ENCODE measurements at regions of chr6 and their contacts with region 1.

Region 1: GRCh38 chr6:134640975-134641429 is 308.9 kb downstream of the ALDH8A1 start:
- DNase-seq: peak; percentile 86
- ATAC-seq: peak; percentile 92
- H3K4me3 ChIP-seq: no peak overlapping the region
- H3K4me3 Mint-ChIP-seq: no peak overlapping the region
- H3K27ac ChIP-seq: no peak overlapping the region
- H3K27ac Mint-ChIP-seq: no peak overlapping the region
- H3K4me1 ChIP-seq: peaks cover 7 to 8% of the 10 kb centered on the region in 2 donors
- H3K4me1 Mint-ChIP-seq: peaks cover 10% of the 10 kb centered on the region
- H3K27me3 ChIP-seq: no peaks in the 10 kb centered on the region
- H3K27me3 Mint-ChIP-seq: no peaks in the 10 kb centered on the region
- CTCF ChIP-seq: peak; percentile 96

Region 2: GRCh38 chr6:134161036-134161435 is 480.0 kb before region 1 on chr6:
- CTCF ChIA-PET with region 1: interaction called, 16 read pairs
- POLR2A ChIA-PET with region 1: no interaction called
- intact Hi-C with region 1: no loop called
- DNase-seq: no peak
- ATAC-seq: no peak
- H3K4me3 ChIP-seq: no peak overlapping the region
- H3K4me3 Mint-ChIP-seq: no peak overlapping the region
- H3K27ac ChIP-seq: no peak overlapping the region
- H3K27ac Mint-ChIP-seq: no peak overlapping the region
- H3K4me1 ChIP-seq: no peaks in the 10 kb centered on the region
- H3K4me1 Mint-ChIP-seq: no peaks in the 10 kb centered on the region
- H3K27me3 ChIP-seq: no peaks in the 10 kb centered on the region
- H3K27me3 Mint-ChIP-seq: no peaks in the 10 kb centered on the region
- CTCF ChIP-seq: no peak

Region 3: GRCh38 chr6:134174672-134175198 is 466.3 kb before region 1 on chr6:
- CTCF ChIA-PET with region 1: interaction called, 187 read pairs
- POLR2A ChIA-PET with region 1: interaction called, 11 read pairs
- intact Hi-C with region 1: loop called (anchors 1 kb)
- DNase-seq: peak; percentile 95
- ATAC-seq: peak; percentile 89
- H3K4me3 ChIP-seq: peak overlapping the region; percentile 75 to 97 (median 77)
- H3K4me3 Mint-ChIP-seq: peak overlapping the region; percentile 95
- H3K27ac ChIP-seq: peak overlapping the region; percentile 69 to 70
- H3K27ac Mint-ChIP-seq: peak overlapping the region; percentile 92
- H3K4me1 ChIP-seq: peaks cover 29 to 33% of the 10 kb centered on the region in 2 donors
- H3K4me1 Mint-ChIP-seq: peaks cover 46% of the 10 kb centered on the region
- H3K27me3 ChIP-seq: no peaks in the 10 kb centered on the region
- H3K27me3 Mint-ChIP-seq: peaks cover 12% of the 10 kb centered on the region
- CTCF ChIP-seq: no peak

Region 4: DNA sequence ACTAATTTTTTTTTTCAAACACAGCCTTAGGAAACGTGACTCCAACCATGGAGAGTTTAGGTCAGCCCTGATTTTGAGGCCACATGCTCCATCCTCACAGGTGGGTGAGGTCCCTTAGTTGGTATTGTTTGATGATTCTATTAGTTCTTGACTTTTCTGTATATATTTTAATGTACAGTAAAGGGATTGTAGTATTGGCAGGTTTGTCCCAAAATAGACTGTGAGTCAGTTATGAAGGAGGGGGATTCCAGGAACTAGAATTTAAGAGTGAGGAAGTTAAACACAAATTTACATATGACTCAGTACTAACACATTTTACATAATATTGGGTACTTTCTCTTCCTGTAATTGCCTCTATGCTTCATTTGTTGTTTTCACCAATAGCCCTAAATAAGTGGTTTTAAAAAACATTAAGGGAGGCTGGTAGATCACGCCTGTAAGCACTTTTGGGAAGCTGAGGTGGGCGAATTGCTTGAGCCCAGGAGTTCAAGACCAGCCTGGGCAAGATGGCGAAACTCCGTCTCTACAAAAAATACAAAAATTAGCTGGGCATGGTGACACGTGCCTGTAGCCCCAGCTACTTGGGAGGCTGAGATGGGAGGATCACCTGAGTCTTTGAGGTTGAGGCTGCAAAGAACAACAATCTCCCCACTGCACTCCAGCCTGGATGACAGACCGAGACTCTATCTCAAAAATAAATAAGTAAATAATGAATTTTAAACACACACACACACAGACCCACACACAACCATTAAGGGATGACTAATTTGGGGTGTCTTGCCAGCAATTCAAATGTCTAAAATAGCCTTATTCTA is 404.9 kb before region 1 on chr6:
- CTCF ChIA-PET with region 1: interaction called, 11 read pairs
- POLR2A ChIA-PET with region 1: no interaction called
- intact Hi-C with region 1: no loop called
- DNase-seq: peak; percentile 87
- ATAC-seq: peak; percentile 84
- H3K4me3 ChIP-seq: peak overlapping the region in 1 of 5 experiments; percentile 10
- H3K4me3 Mint-ChIP-seq: peak overlapping the region; percentile 52
- H3K27ac ChIP-seq: peak overlapping the region; percentile 94 to 97
- H3K27ac Mint-ChIP-seq: peak overlapping the region; percentile 93
- H3K4me1 ChIP-seq: peaks cover 42 to 47% of the 10 kb centered on the region in 2 donors
- H3K4me1 Mint-ChIP-seq: peaks cover 46% of the 10 kb centered on the region
- H3K27me3 ChIP-seq: no peaks in the 10 kb centered on the region
- H3K27me3 Mint-ChIP-seq: no peaks in the 10 kb centered on the region
- CTCF ChIP-seq: no peak

Region 5: GRCh38 chr6:134436281-134436815 is 204.7 kb before region 1 on chr6:
- CTCF ChIA-PET with region 1: interaction called, 10 read pairs
- POLR2A ChIA-PET with region 1: no interaction called
- intact Hi-C with region 1: loop called (anchors 1 kb)
- DNase-seq: peak; percentile 27
- ATAC-seq: peak; percentile 79
- H3K4me3 ChIP-seq: peak overlapping the region in 3 of 5 experiments; percentile 12 to 31 (median 26)
- H3K4me3 Mint-ChIP-seq: peak overlapping the region; percentile 81
- H3K27ac ChIP-seq: no peak overlapping the region
- H3K27ac Mint-ChIP-seq: peak overlapping the region; percentile 84
- H3K4me1 ChIP-seq: peaks cover 6 to 14% of the 10 kb centered on the region in 2 donors
- H3K4me1 Mint-ChIP-seq: peaks cover 20% of the 10 kb centered on the region
- H3K27me3 ChIP-seq: no peaks in the 10 kb centered on the region
- H3K27me3 Mint-ChIP-seq: no peaks in the 10 kb centered on the region
- CTCF ChIP-seq: no peak

Region 6: GRCh38 chr6:134628154-134628553 is 12.8 kb before region 1 on chr6:
- CTCF ChIA-PET with region 1: interaction called, 14 read pairs
- POLR2A ChIA-PET with region 1: no interaction called
- intact Hi-C with region 1: no loop called
- DNase-seq: no peak
- ATAC-seq: no peak
- H3K4me3 ChIP-seq: no peak overlapping the region
- H3K4me3 Mint-ChIP-seq: no peak overlapping the region
- H3K27ac ChIP-seq: no peak overlapping the region
- H3K27ac Mint-ChIP-seq: no peak overlapping the region
- H3K4me1 ChIP-seq: peaks cover 9 to 16% of the 10 kb centered on the region in 2 donors
- H3K4me1 Mint-ChIP-seq: peaks cover 21% of the 10 kb centered on the region
- H3K27me3 ChIP-seq: peaks cover 0 to 3% (median 0%) of the 10 kb centered on the region in 4 experiments
- H3K27me3 Mint-ChIP-seq: peaks cover 9% of the 10 kb centered on the region
- CTCF ChIP-seq: no peak

Region 7: DNA sequence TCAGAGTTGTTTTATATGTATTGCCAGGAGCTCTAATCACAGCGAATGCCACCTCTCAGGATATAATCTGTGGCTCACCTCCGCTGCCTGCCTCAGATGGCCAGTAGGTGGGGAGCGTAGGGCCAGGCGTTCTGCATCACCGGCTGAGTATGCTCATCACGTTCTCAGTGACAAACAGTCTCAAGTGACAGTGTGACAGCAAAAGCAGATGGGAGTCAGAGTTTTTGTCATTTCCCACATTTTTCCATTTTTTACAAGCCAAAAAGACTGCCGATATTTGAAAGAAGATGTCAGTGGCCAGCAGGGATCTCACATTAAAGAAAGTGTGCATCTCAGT is 100.2 kb after region 1 on chr6:
- CTCF ChIA-PET with region 1: no interaction called
- POLR2A ChIA-PET with region 1: no interaction called
- intact Hi-C with region 1: no loop called
- DNase-seq: no peak
- ATAC-seq: no peak
- H3K4me3 ChIP-seq: no peak overlapping the region
- H3K4me3 Mint-ChIP-seq: no peak overlapping the region
- H3K27ac ChIP-seq: no peak overlapping the region
- H3K27ac Mint-ChIP-seq: no peak overlapping the region
- H3K4me1 ChIP-seq: no peaks in the 10 kb centered on the region
- H3K4me1 Mint-ChIP-seq: no peaks in the 10 kb centered on the region
- H3K27me3 ChIP-seq: no peaks in the 10 kb centered on the region
- H3K27me3 Mint-ChIP-seq: peaks cover 18% of the 10 kb centered on the region
- CTCF ChIP-seq: no peak

Region 8: GRCh38 chr6:134882426-134883038 is 241.5 kb after region 1 on chr6:
- CTCF ChIA-PET with region 1: interaction called, 11 read pairs
- POLR2A ChIA-PET with region 1: no interaction called
- intact Hi-C with region 1: loop called (anchors 1 kb)
- DNase-seq: peak; percentile 65
- ATAC-seq: peak; percentile 54
- H3K4me3 ChIP-seq: no peak overlapping the region
- H3K4me3 Mint-ChIP-seq: no peak overlapping the region
- H3K27ac ChIP-seq: no peak overlapping the region
- H3K27ac Mint-ChIP-seq: no peak overlapping the region
- H3K4me1 ChIP-seq: peaks cover 0 to 3% of the 10 kb centered on the region in 2 donors
- H3K4me1 Mint-ChIP-seq: no peaks in the 10 kb centered on the region
- H3K27me3 ChIP-seq: peaks cover 0 to 5% (median 2%) of the 10 kb centered on the region in 4 experiments
- H3K27me3 Mint-ChIP-seq: peaks cover 21% of the 10 kb centered on the region
- CTCF ChIP-seq: peak; percentile 87

Measured in B cell (primary cell).